CD4-positive, alpha-beta T cell (primary cell): ENCODE measurements at regions of chr14 and their contacts with region 1.

Region 1: DNA sequence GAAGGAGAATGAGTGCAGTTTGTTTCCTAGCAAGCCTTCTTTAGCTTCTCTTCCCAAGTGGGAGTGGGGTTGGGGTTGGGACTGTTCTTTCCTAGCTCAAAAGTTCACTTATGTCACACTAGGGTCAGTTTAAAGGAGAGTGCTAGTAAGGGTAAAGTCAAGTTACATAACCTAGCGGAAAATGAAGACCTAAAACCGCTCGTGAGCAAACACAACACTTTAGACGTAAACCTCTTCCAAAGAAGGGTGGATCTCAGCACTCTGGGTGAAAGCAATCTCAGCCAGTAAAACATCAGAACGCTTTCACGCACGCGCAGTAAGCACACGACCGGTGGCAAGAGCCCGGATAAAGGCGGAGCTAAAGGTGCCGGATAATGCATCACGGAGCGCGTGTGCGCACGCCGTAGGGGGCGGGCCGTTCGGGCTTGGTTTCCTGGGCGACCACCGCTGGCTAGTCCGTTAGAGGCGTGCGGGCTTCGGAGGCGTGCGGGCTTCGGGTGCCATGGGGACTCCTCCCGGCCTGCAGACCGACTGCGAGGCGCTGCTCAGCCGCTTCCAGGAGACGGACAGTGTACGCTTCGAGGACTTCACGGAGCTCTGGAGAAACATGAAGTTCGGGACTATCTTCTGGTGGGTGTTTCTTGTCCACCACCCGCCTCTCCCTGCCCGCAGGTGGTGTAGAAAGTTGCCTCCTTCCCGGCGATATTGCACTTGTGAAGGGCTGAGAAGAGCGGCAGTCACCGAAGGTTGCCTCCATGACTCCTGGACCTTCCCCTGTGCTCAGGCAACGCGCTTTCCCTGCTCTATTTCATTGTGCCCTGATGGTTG is at the start of gene SNAPC1:
- DNase-seq: peak; percentile 95 to 100 (median 97)
- ATAC-seq: peak; percentile 90
- H3K4me3 ChIP-seq: peak within 1 kb of the TSS; percentile 68
- H3K4me3 Mint-ChIP-seq: peak within 1 kb of the TSS; percentile 93
- H3K27ac ChIP-seq: peak within 1 kb of the TSS; percentile 96 to 99
- H3K27ac Mint-ChIP-seq: peak within 1 kb of the TSS; percentile 99
- H3K4me1 ChIP-seq: peaks cover 23% of the 10 kb centered on the region
- H3K4me1 Mint-ChIP-seq: peaks cover 54% of the 10 kb centered on the region
- H3K27me3 ChIP-seq: no peaks in the 10 kb centered on the region
- H3K27me3 Mint-ChIP-seq: no peaks in the 10 kb centered on the region
- CTCF ChIP-seq: no peak
- total RNA-seq, gene SNAPC1: 4.8 to 5.0 TPM

Region 2: GRCh38 chr14:61280526-61281185 is 481.5 kb before region 1 on chr14:
- CTCF ChIA-PET with region 1: no interaction called
- POLR2A ChIA-PET with region 1: interaction called, 16 read pairs
- intact Hi-C with region 1: no loop called
- DNase-seq: peak; percentile 53 to 91 (median 80)
- ATAC-seq: peak; percentile 84
- H3K4me3 ChIP-seq: peak overlapping the region; percentile 63
- H3K4me3 Mint-ChIP-seq: peak overlapping the region; percentile 96
- H3K27ac ChIP-seq: peak overlapping the region in 1 of 2 donors; percentile 60
- H3K27ac Mint-ChIP-seq: peak overlapping the region; percentile 94
- H3K4me1 ChIP-seq: peaks cover 24% of the 10 kb centered on the region
- H3K4me1 Mint-ChIP-seq: peaks cover 28% of the 10 kb centered on the region
- H3K27me3 ChIP-seq: no peaks in the 10 kb centered on the region
- H3K27me3 Mint-ChIP-seq: no peaks in the 10 kb centered on the region
- CTCF ChIP-seq: peak; percentile 74

Region 3: DNA sequence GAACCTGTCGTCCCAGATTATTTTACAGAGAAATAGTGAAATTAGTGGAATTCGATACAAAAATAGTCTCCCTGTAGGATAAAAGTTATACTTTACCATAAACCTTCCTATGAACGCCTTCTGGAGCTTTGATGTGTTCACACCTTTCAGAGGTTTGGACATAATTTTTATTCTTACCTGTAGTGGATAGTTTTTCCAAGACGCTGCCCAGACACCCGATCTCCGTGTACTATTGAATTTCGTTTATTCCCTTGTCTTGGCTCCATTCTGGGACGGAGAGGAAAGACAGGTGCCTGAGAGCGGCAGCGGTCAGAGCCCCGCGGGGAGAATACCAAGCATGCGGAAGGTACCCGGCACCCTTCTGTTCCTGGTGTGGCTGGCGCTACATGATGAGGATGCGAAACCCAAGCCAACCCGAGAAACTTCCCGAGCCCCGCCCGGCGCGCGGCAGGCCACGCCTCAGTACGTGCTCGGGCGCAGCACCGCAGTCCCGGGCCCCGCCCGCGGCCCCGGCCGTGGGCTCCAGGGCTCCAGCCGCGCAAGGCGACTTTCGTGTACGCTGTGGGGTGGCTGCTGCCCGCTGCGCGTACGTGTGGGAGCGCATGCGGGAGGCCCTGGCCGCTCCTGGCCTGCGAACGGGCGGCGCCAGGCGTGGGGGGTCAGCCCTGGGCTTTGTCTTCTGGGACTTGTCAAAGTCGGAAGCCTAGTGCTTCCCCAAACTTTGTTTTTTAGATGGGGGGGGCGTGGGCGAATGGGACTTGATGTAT is 11.3 kb before region 1 on chr14:
- CTCF ChIA-PET with region 1: interaction called, 3 read pairs
- POLR2A ChIA-PET with region 1: interaction called, 37 read pairs
- intact Hi-C with region 1: loop called in 1 of 2 experiments (anchors 2 kb)
- DNase-seq: peak; percentile 40 to 91 (median 68)
- ATAC-seq: peak; percentile 94
- H3K4me3 ChIP-seq: peak overlapping the region; percentile 56
- H3K4me3 Mint-ChIP-seq: peak overlapping the region; percentile 83
- H3K27ac ChIP-seq: peak overlapping the region in 1 of 2 donors; percentile 32
- H3K27ac Mint-ChIP-seq: peak overlapping the region; percentile 58
- H3K4me1 ChIP-seq: peaks cover 7% of the 10 kb centered on the region
- H3K4me1 Mint-ChIP-seq: peaks cover 4% of the 10 kb centered on the region
- H3K27me3 ChIP-seq: no peaks in the 10 kb centered on the region
- H3K27me3 Mint-ChIP-seq: no peaks in the 10 kb centered on the region
- CTCF ChIP-seq: no peak

Region 4: GRCh38 chr14:61780125-61780524 is 18.0 kb after region 1 on chr14:
- CTCF ChIA-PET with region 1: interaction called, 4 read pairs
- POLR2A ChIA-PET with region 1: interaction called, 12 read pairs
- intact Hi-C with region 1: loop called in 1 of 2 experiments (anchors 2 kb)
- DNase-seq: peak in 4 of 14 experiments; percentile 22 to 60 (median 28)
- ATAC-seq: peak; percentile 82
- H3K4me3 ChIP-seq: no peak overlapping the region
- H3K4me3 Mint-ChIP-seq: peak overlapping the region; percentile 55
- H3K27ac ChIP-seq: peak overlapping the region; percentile 30 to 42
- H3K27ac Mint-ChIP-seq: peak overlapping the region; percentile 50
- H3K4me1 ChIP-seq: peaks cover 11% of the 10 kb centered on the region
- H3K4me1 Mint-ChIP-seq: peaks cover 44% of the 10 kb centered on the region
- H3K27me3 ChIP-seq: no peaks in the 10 kb centered on the region
- H3K27me3 Mint-ChIP-seq: no peaks in the 10 kb centered on the region
- CTCF ChIP-seq: no peak

Region 5: DNA sequence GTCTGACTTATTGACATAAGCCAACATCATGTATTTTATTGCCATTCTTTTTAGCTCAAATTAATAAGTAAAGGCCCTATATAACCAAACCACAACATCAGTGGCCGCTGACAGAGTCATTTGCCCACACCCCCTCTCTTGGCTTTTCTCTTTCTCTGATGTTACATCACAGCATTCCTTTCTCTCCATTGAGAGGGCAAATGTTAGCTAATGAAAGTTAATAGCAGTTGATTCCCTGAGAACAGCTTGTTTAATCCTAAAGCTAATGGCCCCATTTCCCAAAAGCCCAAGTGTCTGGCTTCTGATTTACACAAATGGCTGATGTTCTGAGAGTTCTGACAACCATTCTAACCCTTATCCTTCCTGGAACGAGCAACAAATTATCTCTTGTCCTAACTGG is 308.9 kb after region 1 on chr14:
- CTCF ChIA-PET with region 1: no interaction called
- POLR2A ChIA-PET with region 1: no interaction called
- intact Hi-C with region 1: no loop called
- DNase-seq: no peak
- ATAC-seq: no peak
- H3K4me3 ChIP-seq: no peak overlapping the region
- H3K4me3 Mint-ChIP-seq: no peak overlapping the region
- H3K27ac ChIP-seq: no peak overlapping the region
- H3K27ac Mint-ChIP-seq: no peak overlapping the region
- H3K4me1 ChIP-seq: no peaks in the 10 kb centered on the region
- H3K4me1 Mint-ChIP-seq: no peaks in the 10 kb centered on the region
- H3K27me3 ChIP-seq: peaks cover 0 to 4% of the 10 kb centered on the region in 2 experiments
- H3K27me3 Mint-ChIP-seq: no peaks in the 10 kb centered on the region
- CTCF ChIP-seq: no peak